Endothelial cell of umbilical vein (primary cell): ENCODE measurements at regions of chr6 and their contacts with region 1.

Region 1: DNA sequence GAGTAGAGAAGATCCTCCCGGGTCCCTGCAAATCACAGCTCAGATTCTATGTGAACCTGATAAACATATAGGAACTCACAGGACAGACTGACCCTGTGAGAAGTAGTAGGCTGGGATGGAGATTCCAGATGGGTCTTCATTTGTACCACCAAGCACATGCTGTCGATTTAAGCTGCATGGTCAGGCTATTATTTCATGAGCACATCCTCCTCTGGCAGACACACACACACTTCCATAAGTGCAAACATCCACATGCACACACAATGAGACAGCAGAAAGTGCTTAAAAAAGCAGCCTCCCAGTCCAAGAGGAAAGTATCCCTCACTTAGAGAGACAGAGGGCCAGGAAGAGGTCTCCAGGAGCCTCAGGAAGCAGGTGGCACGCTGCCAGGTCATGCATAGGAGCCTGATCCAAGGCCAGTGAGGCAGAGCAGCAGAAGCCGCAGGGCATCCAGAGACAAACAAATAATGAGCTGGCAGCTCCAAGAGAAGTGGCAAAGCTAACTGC is 131.8 kb downstream of the UNC5CL start:
- DNase-seq: peak; percentile 68
- H3K4me3 ChIP-seq: no peak overlapping the region
- H3K27ac ChIP-seq: peak overlapping the region; percentile 38
- H3K4me1 ChIP-seq: peaks cover 19% of the 10 kb centered on the region
- H3K27me3 ChIP-seq: no peaks in the 10 kb centered on the region
- CTCF ChIP-seq: no peak
- POLR2A ChIP-seq: no peak

Region 2: GRCh38 chr6:40042242-40042641 is 865.0 kb before region 1 on chr6:
- CTCF ChIA-PET with region 1: no interaction called
- POLR2A ChIA-PET with region 1: no interaction called
- dilution Hi-C with region 1: no loop called
- intact Hi-C with region 1: no loop called
- DNase-seq: no peak
- H3K4me3 ChIP-seq: no peak overlapping the region
- H3K27ac ChIP-seq: no peak overlapping the region
- H3K4me1 ChIP-seq: no peaks in the 10 kb centered on the region
- H3K27me3 ChIP-seq: no peaks in the 10 kb centered on the region
- CTCF ChIP-seq: no peak
- POLR2A ChIP-seq: no peak

Region 3: DNA sequence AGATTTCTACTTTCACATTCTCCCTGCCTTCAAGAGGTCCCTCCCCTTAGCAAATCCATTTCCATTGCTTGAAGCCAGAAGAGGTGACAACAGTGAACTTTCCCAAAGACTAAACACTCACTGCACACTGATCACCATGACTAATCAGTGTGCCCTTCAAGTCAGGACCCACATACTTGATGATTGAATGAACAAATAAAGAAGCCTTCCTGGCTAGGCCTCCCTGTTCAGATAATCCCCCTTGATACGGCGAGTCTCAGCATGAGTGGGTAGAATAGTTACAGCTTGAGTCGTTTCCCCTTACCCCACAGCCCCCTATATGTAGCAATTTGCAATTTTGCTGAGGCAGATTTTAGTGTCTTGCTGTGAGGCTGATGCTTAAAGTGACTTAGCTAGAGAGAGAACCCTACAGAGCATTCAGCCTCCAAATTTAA is 29.6 kb after region 1 on chr6:
- CTCF ChIA-PET with region 1: interaction called, 3 read pairs
- POLR2A ChIA-PET with region 1: no interaction called
- dilution Hi-C with region 1: no loop called
- intact Hi-C with region 1: loop called (anchors 1 kb)
- DNase-seq: peak; percentile 79
- H3K4me3 ChIP-seq: no peak overlapping the region
- H3K27ac ChIP-seq: peak overlapping the region; percentile 7
- H3K4me1 ChIP-seq: peaks cover 6% of the 10 kb centered on the region
- H3K27me3 ChIP-seq: peaks cover 0 to 3% of the 10 kb centered on the region in 2 experiments
- CTCF ChIP-seq: no peak
- POLR2A ChIP-seq: no peak

Region 4: DNA sequence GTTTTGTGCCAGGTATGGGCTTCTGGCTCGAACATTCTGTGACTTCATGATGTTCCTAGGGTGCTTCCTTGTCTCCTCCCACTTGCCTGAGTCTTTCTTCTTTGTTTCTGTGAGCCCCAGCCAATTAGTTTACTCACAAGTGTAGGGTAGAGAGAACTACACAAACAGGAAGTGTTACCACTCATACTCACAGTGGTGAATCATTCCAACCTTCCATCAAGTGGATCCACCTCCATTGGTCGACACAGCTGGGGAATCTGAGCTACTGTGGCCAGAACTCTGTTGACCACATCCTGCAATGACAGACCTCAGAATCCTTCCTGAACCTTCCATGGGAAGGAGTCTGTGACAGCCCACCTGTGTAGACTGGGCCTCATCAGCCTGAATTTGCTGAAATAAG is 55.0 kb after region 1 on chr6:
- CTCF ChIA-PET with region 1: interaction called, 3 read pairs
- POLR2A ChIA-PET with region 1: no interaction called
- dilution Hi-C with region 1: no loop called
- intact Hi-C with region 1: loop called (anchors 5 kb)
- DNase-seq: peak; percentile 65
- H3K4me3 ChIP-seq: no peak overlapping the region
- H3K27ac ChIP-seq: peak overlapping the region; percentile 27
- H3K4me1 ChIP-seq: peaks cover 4% of the 10 kb centered on the region
- H3K27me3 ChIP-seq: no peaks in the 10 kb centered on the region
- CTCF ChIP-seq: no peak
- POLR2A ChIP-seq: no peak